WTC11 (cell line): ENCODE measurements at regions of chr9 and their contacts with region 1.

Region 1: GRCh38 chr9:96217754-96218693 is 84.0 kb downstream of the HSD17B3 start:
- DNase-seq: peak; percentile 78
- ATAC-seq: peak; percentile 73
- H3K4me3 Mint-ChIP-seq: peak overlapping the region; percentile 54
- H3K27ac Mint-ChIP-seq: peak overlapping the region; percentile 26; the same call in 1 of the 2 replicates
- H3K4me1 Mint-ChIP-seq: peaks cover 18% of the 10 kb centered on the region
- H3K27me3 Mint-ChIP-seq: peaks cover 27% of the 10 kb centered on the region
- CTCF ChIP-seq: peak; percentile 97

Region 2: GRCh38 chr9:95938724-95939123 is 279.3 kb before region 1 on chr9:
- CTCF ChIA-PET with region 1: no interaction called
- POLR2A ChIA-PET with region 1: no interaction called
- DNase-seq: no peak
- ATAC-seq: no peak
- H3K4me3 Mint-ChIP-seq: no peak overlapping the region
- H3K27ac Mint-ChIP-seq: no peak overlapping the region
- H3K4me1 Mint-ChIP-seq: peaks cover 18% of the 10 kb centered on the region
- H3K27me3 Mint-ChIP-seq: no peaks in the 10 kb centered on the region
- CTCF ChIP-seq: no peak

Region 3: DNA sequence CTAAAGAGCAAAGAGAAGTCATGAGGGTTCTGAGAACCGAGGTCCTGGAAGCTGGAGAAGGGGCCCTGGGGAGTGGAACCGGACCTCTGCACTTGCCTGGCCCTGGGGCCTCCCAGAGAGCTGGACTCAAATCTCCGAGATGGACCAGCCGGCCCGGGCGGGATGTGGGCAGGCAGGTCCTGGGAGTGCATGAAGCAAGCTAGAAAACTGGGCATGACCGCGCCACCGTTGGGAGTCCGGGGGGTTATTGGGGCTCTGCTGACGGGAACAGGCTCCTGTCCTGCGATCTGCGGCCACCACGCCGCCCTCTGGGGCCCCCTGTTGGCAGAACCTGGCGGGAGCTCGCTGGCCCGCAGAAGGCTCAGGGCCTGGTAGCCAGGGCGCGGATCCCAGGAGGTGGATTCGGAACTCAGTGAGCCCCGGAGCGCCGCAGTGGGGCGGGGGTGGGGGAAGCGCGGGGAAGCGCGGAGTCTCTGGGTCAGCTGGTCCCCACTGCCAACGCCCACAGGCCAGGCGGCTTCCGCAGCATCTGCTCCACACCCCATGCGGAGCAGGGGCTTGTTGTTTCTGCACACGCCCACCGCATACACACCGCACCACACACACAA is 191.9 kb before region 1 on chr9:
- CTCF ChIA-PET with region 1: interaction called, 17 read pairs
- POLR2A ChIA-PET with region 1: no interaction called
- DNase-seq: peak; percentile 86
- ATAC-seq: peak; percentile 51
- H3K4me3 Mint-ChIP-seq: peak overlapping the region; percentile 38
- H3K27ac Mint-ChIP-seq: no peak overlapping the region
- H3K4me1 Mint-ChIP-seq: peaks cover 20% of the 10 kb centered on the region
- H3K27me3 Mint-ChIP-seq: peaks cover 83% of the 10 kb centered on the region
- CTCF ChIP-seq: peak; percentile 48; the same call in 1 of the 2 replicates

Region 4: GRCh38 chr9:96177005-96177718 is 40.9 kb before region 1 on chr9:
- CTCF ChIA-PET with region 1: interaction called, 19 read pairs
- POLR2A ChIA-PET with region 1: no interaction called
- DNase-seq: peak; percentile 33
- ATAC-seq: peak; percentile 95
- H3K4me3 Mint-ChIP-seq: no peak overlapping the region
- H3K27ac Mint-ChIP-seq: no peak overlapping the region
- H3K4me1 Mint-ChIP-seq: peaks cover 6% of the 10 kb centered on the region; the same call in 1 of the 2 replicates
- H3K27me3 Mint-ChIP-seq: no peaks in the 10 kb centered on the region
- CTCF ChIP-seq: no peak

Region 5: GRCh38 chr9:96201140-96201539 is 16.9 kb before region 1 on chr9:
- CTCF ChIA-PET with region 1: interaction called, 19 read pairs
- POLR2A ChIA-PET with region 1: interaction called, 3 read pairs
- DNase-seq: no peak
- ATAC-seq: no peak; the same call in 1 of the 2 replicates
- H3K4me3 Mint-ChIP-seq: no peak overlapping the region
- H3K27ac Mint-ChIP-seq: 0 out of 2 replicates have a peak overlapping the region, but pooled peaks have one; percentile 21
- H3K4me1 Mint-ChIP-seq: peaks cover 9% of the 10 kb centered on the region
- H3K27me3 Mint-ChIP-seq: no peaks in the 10 kb centered on the region; the same call in 1 of the 2 replicates
- CTCF ChIP-seq: no peak

Region 6: DNA sequence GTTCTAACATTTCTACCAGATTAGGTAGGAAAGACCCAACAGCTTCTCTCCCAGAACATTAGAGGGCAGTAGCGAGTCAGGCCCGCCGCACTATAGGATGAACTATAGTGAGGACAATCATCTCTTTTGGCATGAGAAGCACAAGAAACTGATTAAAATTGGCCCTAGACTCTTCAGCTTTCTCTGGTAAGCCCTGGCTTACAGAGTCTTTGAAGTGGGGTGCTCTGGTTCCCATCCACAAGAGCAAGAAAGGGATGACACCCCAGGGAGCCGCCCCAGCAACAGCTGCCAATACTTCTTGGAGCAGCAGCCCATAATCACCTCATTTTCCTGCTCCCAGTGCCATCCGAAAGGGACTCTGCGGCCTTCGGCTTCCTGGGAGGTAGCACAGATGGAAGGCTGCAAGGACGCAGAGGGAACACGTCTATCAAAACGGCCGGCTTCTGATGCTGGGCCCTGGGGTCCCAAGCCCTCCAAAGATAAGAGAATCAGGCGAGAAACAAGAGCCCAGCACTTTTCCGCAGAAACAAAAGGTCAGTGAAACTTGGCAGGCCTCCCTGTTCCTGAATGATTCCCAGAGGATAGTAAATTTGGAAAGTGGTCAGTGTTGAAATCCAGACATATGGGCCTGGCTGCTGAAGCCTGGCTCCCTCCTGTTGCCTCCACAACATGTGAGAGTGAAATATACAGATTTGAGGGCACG is 14.7 kb after region 1 on chr9:
- CTCF ChIA-PET with region 1: interaction called, 18 read pairs
- POLR2A ChIA-PET with region 1: no interaction called
- DNase-seq: peak; percentile 48
- ATAC-seq: peak; percentile 96
- H3K4me3 Mint-ChIP-seq: no peak overlapping the region
- H3K27ac Mint-ChIP-seq: no peak overlapping the region
- H3K4me1 Mint-ChIP-seq: no peaks in the 10 kb centered on the region
- H3K27me3 Mint-ChIP-seq: no peaks in the 10 kb centered on the region
- CTCF ChIP-seq: peak; percentile 69; the same call in 1 of the 2 replicates

Region 7: DNA sequence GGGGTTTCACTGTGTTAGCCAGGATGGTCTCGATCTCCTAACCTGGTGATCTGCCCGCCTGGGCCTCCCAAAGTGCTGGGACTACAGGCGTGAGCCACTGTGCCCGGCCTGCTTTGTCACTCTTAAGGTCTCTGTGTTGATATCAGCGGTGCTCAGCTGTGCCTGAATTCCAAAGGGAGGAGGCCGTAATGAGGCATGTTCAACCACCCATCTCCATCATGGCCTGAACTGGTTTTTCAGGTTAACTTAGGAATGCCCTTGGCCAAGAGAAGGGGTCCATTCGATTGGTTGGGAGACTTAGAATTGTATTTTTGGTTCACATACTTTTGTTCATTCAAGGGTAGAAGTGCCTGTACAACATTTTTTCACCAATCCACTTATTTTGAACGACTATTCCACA is 61.9 kb after region 1 on chr9:
- CTCF ChIA-PET with region 1: no interaction called
- POLR2A ChIA-PET with region 1: no interaction called
- DNase-seq: no peak
- ATAC-seq: peak; percentile 55
- H3K4me3 Mint-ChIP-seq: no peak overlapping the region
- H3K27ac Mint-ChIP-seq: no peak overlapping the region
- H3K4me1 Mint-ChIP-seq: peaks cover 19% of the 10 kb centered on the region
- H3K27me3 Mint-ChIP-seq: peaks cover 12% of the 10 kb centered on the region
- CTCF ChIP-seq: no peak